KBM-7 (cell line): ENCODE measurements at regions of chr11 and their contacts with region 1.

Region 1: DNA sequence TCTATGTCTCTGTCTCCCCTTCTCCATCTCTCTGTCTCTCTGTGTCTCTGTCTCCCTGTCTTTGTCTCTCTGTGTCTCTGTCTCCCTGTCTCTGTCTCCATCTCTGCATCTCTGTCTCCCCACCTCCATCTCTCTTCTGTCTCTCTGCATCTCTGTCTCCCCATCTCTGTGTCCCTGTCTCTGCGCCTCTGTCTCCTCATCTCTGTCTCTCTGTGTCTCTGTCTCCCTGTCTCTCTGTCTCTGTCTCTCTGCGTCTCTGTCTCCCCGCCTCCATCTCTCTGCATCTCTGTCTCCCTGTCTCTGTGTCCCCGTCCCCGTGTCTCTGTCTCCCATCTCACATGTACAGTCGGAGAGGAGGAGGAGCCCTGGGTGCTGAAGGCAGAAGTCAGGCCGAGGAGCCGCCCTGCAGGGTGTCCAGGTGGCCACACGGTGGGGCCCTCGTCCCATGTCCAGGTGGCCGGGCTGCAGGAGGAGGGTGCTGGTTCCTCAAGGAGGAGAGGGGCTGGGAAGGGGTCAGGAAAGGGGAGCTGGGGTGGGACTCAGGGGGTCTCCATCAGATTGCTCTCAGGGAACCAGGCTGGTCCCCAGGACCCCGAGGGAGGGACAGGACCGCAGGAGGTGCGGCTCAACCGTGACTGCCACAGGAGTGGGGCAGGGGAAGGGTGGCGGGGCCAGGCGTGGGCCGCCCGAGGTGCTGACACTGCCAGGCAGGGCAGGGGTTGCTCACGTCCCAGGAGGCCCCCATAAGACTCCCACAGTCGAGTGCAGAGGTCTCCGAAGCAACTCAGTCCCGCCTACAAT is 25.6 kb upstream of the TH start:
- DNase-seq: peak; percentile 83

Region 2: GRCh38 chr11:2097356-2097997 is 99.7 kb before region 1 on chr11:
- in situ Hi-C with region 1: no loop called
- DNase-seq: no peak

Region 3: GRCh38 chr11:2419638-2420501 is 222.7 kb after region 1 on chr11:
- in situ Hi-C with region 1: loop called (anchors 10 kb)
- DNase-seq: peak; percentile 73

Region 4: DNA sequence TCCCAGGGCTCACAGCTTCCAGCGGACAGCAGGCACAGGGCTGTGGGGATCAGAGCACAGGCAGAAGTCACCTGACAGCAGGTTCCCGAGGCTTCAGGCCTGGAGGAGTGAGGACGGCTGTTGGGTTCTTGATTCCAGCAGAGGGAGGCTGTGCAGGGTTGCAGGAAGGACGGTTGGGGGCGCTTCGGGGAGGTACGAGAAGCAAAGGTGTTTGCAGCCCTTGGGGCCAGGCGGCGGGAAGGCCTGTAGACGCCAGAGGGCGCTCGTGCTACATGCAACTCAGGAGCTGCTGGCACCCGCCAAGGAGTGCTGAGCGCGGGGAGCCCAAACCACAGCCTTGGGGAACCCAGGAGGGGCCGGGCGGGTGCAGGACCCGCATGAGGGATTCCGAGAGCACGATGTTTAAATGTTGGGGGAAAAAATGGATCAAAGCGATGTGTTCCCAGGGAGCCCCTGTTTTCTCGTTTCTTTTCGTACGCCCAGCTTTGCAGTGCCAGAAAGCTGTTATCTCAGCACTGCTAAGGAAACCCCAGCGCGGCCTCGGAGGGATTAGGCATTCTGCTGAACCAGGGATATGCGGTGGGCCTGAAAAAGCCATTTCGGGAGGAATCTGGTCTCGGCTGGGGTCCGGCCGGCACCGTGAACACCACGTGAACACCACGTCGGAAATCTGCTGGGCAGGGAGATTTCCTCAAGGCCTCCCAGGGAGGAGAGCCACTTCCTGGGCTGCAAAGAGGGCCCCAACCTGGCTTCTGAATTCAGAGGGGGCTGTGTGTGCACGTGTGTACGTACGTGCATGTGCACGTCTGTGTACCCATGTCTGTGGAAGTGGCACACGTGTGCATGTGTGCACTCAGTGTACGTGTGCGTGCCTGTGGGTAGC is 335.8 kb after region 1 on chr11:
- in situ Hi-C with region 1: loop called (anchors 25 kb)
- DNase-seq: peak; percentile 96